Calu3 (cell line): ENCODE measurements at regions of chr7 and their contacts with region 1.

Region 1: DNA sequence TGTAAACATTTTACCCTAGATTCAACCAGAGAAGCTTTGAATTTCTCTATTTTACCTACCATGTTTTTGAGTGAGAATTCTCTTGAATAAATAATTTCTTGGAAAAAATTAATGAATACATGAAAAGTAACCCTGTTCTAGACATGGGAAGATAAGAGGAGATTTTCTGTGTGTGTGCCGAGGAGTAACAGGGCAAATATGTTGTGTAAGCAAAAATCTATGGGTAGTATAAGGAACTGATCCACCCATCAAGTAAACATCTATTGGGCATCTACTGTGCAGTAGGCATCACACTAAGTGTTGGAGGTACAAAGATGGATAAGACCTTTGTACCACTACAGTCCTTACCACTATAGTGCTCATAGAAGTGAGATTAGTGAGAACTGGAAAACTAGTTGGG is 8.2 kb upstream of the NXPH1 start:
- DNase-seq: no peak
- H3K4me3 Mint-ChIP-seq: no peak overlapping the region
- H3K27ac Mint-ChIP-seq: no peak overlapping the region
- H3K4me1 Mint-ChIP-seq: no peaks in the 10 kb centered on the region
- H3K27me3 Mint-ChIP-seq: no peaks in the 10 kb centered on the region
- CTCF ChIP-seq: no peak

Region 2: GRCh38 chr7:8465338-8465737 is 40.1 kb after region 1 on chr7:
- CTCF ChIA-PET with region 1: no interaction called
- intact Hi-C with region 1: loop called (anchors 1 kb)
- DNase-seq: no peak
- H3K4me3 Mint-ChIP-seq: no peak overlapping the region
- H3K27ac Mint-ChIP-seq: no peak overlapping the region
- H3K4me1 Mint-ChIP-seq: peaks cover 13% of the 10 kb centered on the region
- H3K27me3 Mint-ChIP-seq: no peaks in the 10 kb centered on the region
- CTCF ChIP-seq: no peak